ENCODE measurements at regions of chr19 and their contacts with region 1.

Region 1: DNA sequence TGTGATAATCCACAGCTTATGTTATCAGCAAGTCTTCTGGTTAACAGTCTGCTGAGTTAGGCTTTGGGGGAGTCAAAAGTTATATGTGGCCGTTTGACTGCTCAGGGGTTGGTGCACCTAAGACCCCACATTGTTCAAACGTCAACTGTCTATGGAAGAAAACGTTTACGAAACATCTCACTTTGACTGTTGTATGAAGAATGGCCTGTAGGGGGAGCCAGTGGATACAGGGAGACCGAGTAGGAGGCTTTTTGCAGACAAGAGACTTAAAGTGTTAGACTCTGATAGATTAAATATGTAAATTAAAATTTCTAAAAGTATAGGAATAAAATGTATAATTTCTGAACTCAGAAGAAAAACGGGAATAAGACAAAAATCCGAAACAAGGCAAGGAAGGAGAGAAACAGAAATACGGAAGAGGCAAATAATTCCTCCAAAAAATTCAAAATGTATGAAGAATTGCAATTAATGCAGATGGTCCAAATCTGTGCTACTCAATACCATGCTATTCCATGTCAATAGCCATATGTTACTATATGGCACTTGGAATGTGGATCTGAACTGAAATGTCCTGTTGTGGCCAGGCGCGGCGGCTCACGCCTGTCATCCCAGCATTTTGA is 37.8 kb downstream of the TNFSF14 start:
- DNase-seq: peak; percentile 63 to 74 (median 70)
- H3K4me3 ChIP-seq: no peak overlapping the region
- H3K4me3 Mint-ChIP-seq: no peak overlapping the region
- H3K27ac ChIP-seq: no peak overlapping the region
- H3K27ac Mint-ChIP-seq: no peak overlapping the region
- H3K4me1 ChIP-seq: no peaks in the 10 kb centered on the region
- H3K4me1 Mint-ChIP-seq: peaks cover 5% of the 10 kb centered on the region
- H3K27me3 ChIP-seq: peaks cover 2 to 6% of the 10 kb centered on the region in 2 donors
- H3K27me3 Mint-ChIP-seq: peaks cover 25 to 64% (median 46%) of the 10 kb centered on the region in 3 donors
- CTCF ChIP-seq: peak; percentile 87

Region 2: GRCh38 chr19:6516659-6517291 is 115.3 kb before region 1 on chr19:
- intact Hi-C with region 1: loop called (anchors 2 kb)
- DNase-seq: peak; percentile 78 to 86 (median 84)
- H3K4me3 ChIP-seq: peak overlapping the region; percentile 65 to 82 (median 74)
- H3K4me3 Mint-ChIP-seq: peak overlapping the region; percentile 98 to 100
- H3K27ac ChIP-seq: peak overlapping the region; percentile 38 to 52
- H3K27ac Mint-ChIP-seq: peak overlapping the region; percentile 83 to 97 (median 89)
- H3K4me1 ChIP-seq: peaks cover 18 to 31% of the 10 kb centered on the region in 2 donors
- H3K4me1 Mint-ChIP-seq: peaks cover 25% of the 10 kb centered on the region
- H3K27me3 ChIP-seq: no peaks in the 10 kb centered on the region
- H3K27me3 Mint-ChIP-seq: peaks cover 5 to 28% (median 20%) of the 10 kb centered on the region in 3 donors
- CTCF ChIP-seq: peak; percentile 94

Region 3: GRCh38 chr19:6654347-6655310 is 22.5 kb after region 1 on chr19:
- intact Hi-C with region 1: no loop called
- DNase-seq: no peak
- H3K4me3 ChIP-seq: no peak overlapping the region
- H3K4me3 Mint-ChIP-seq: peak overlapping the region in 1 of 2 donors; percentile 26
- H3K27ac ChIP-seq: no peak overlapping the region
- H3K27ac Mint-ChIP-seq: no peak overlapping the region
- H3K4me1 ChIP-seq: no peaks in the 10 kb centered on the region
- H3K4me1 Mint-ChIP-seq: peaks cover 5% of the 10 kb centered on the region
- H3K27me3 ChIP-seq: peaks cover 11 to 54% of the 10 kb centered on the region in 2 donors
- H3K27me3 Mint-ChIP-seq: peaks cover 59 to 81% (median 67%) of the 10 kb centered on the region in 3 donors
- CTCF ChIP-seq: no peak

Region 4: DNA sequence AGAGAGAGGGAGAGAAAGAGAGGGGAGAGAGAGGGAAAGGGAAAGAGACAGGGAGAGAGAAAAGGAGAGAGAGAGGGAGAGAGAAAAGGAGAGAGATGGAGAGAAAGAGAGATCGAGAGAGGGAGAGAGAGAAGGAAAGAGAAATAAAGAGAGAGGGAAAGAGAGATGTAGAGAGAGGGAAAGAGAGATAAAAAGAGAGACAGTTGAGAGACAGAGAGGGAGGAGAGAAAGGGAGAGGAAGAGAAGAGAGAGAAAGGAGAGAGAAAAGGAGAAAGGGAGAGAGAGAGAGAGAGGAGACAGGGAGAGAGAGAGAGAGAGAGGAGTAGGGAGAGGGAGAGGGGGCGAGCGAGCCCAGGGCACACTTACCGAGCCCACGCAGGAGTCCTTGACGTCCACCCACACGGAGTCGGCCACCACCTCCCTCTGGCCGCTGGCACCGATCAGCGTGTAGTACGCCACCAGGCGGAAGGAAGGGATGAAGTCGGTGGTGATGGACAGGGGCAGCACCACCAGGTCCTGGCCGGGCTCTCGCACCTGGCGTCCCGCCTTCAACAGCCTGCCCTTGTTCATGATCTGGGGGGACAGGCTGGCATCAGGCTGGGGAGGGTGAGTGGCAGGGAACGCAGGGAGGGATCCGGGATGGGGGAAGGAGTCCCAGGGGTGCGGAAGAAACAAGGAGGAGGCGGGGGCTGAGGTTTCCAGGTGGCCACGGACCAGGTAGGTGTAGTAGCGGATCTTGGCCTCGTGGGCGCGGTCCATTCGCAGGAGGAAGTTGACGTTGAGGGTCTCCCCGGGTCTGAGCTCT is 78.4 kb after region 1 on chr19:
- intact Hi-C with region 1: loop called in 1 of 2 experiments (anchors 5 kb)
- DNase-seq: peak; percentile 31 to 50 (median 45)
- H3K4me3 ChIP-seq: no peak overlapping the region
- H3K4me3 Mint-ChIP-seq: peak overlapping the region in 1 of 2 donors; percentile 75
- H3K27ac ChIP-seq: no peak overlapping the region
- H3K27ac Mint-ChIP-seq: peak overlapping the region in 1 of 7 donors; percentile 30
- H3K4me1 ChIP-seq: no peaks in the 10 kb centered on the region
- H3K4me1 Mint-ChIP-seq: peaks cover 9% of the 10 kb centered on the region
- H3K27me3 ChIP-seq: peaks cover 3 to 30% of the 10 kb centered on the region in 2 donors
- H3K27me3 Mint-ChIP-seq: peaks cover 43 to 55% (median 44%) of the 10 kb centered on the region in 3 donors
- CTCF ChIP-seq: peak; percentile 49